ENCODE measurements at regions of chr1 and their contacts with region 1.

Region 1: GRCh38 chr1:29145739-29146437 is 22.2 kb upstream of the TMEM200B start:
- DNase-seq: no peak
- ATAC-seq: peak; percentile 47
- H3K4me3 ChIP-seq: no peak overlapping the region
- H3K27ac ChIP-seq: 0 out of 3 replicates have a peak overlapping the region, but pooled peaks have one; percentile 10
- H3K4me1 ChIP-seq: peaks cover 2 to 4% of the 10 kb centered on the region in 2 experiments; a peak in 3 of 5 replicates
- H3K27me3 ChIP-seq: no peaks in the 10 kb centered on the region
- CTCF ChIP-seq: no peak
- EP300 ChIP-seq: no peak
- POLR2A ChIP-seq: peak; percentile 69
- RAD21 ChIP-seq: no peak

Region 2: GRCh38 chr1:29129916-29130315 is 16.0 kb before region 1 on chr1:
- CTCF ChIA-PET with region 1: no interaction called
- POLR2A ChIA-PET with region 1: interaction called, 12 read pairs
- in situ Hi-C with region 1: no loop called
- intact Hi-C with region 1: no loop called
- DNase-seq: no peak
- ATAC-seq: peak; percentile 35
- H3K4me3 ChIP-seq: no peak overlapping the region
- H3K27ac ChIP-seq: no peak overlapping the region
- H3K4me1 ChIP-seq: peaks cover 6 to 16% of the 10 kb centered on the region in 2 experiments; a peak in 4 of 5 replicates
- H3K27me3 ChIP-seq: no peaks in the 10 kb centered on the region
- CTCF ChIP-seq: no peak
- EP300 ChIP-seq: no peak
- POLR2A ChIP-seq: no peak
- RAD21 ChIP-seq: no peak

Measured in K562 (cell line).